Panc1 (cell line): ENCODE measurements at regions of chr15 and their contacts with region 1.

Region 1: GRCh38 chr15:70400766-70401541 is 303.2 kb upstream of the TLE3 start:
- DNase-seq: no peak
- ATAC-seq: no peak
- H3K4me3 ChIP-seq: no peak overlapping the region
- H3K27ac ChIP-seq: no peak overlapping the region
- H3K4me1 ChIP-seq: no peaks in the 10 kb centered on the region
- H3K27me3 ChIP-seq: no peaks in the 10 kb centered on the region
- CTCF ChIP-seq: no peak

Region 2: DNA sequence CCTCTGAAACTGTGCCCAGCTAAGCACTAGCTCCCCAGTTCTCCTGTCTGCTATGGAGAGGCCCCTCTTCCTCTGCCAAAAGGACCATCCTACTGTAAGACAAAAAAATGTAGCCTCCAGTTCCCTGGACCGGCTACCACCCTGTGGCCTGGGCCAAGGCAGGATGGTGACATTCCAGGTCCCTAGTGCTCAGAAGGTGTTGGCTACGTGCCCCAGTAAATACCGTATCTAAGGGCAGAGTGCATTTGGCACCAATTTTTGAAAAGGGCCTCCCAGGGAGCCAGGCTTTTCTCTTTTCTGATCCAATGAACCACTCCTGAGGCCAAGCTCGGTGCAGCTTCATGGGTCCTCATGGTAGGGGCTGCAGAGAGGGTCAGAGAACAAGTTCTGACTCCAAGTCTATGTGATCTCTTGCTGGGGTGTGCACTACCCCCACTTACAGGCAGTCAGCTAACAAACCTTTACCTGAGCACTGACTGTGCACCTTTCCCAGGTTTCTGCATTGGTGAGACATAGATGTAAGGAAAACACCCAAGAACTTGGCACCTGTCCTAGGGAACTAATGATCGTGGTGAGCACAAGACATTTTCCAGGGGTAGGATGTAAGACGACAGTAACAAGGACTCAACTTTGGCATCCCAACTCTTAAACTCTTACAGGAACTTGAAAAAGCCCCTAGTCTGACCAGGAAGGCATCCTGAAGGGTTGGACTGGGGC is 335.8 kb before region 1 on chr15:
- CTCF ChIA-PET with region 1: interaction called, 10 read pairs
- POLR2A ChIA-PET with region 1: no interaction called
- in situ Hi-C with region 1: no loop called
- intact Hi-C with region 1: no loop called
- DNase-seq: no peak
- ATAC-seq: no peak
- H3K4me3 ChIP-seq: no peak overlapping the region
- H3K27ac ChIP-seq: no peak overlapping the region
- H3K4me1 ChIP-seq: no peaks in the 10 kb centered on the region; the same call in 1 of the 2 replicates
- H3K27me3 ChIP-seq: no peaks in the 10 kb centered on the region
- CTCF ChIP-seq: no peak

Region 3: GRCh38 chr15:70259028-70259424 is 141.9 kb before region 1 on chr15:
- CTCF ChIA-PET with region 1: interaction called, 13 read pairs
- POLR2A ChIA-PET with region 1: interaction called, 14 read pairs
- in situ Hi-C with region 1: no loop called
- intact Hi-C with region 1: no loop called
- DNase-seq: no peak
- ATAC-seq: no peak; the same call in 1 of the 2 replicates
- H3K4me3 ChIP-seq: no peak overlapping the region
- H3K27ac ChIP-seq: no peak overlapping the region; the same call in 1 of the 2 replicates
- H3K4me1 ChIP-seq: 0 out of 2 replicates have a peak, but pooled peaks cover 4% of the 10 kb centered on the region
- H3K27me3 ChIP-seq: no peaks in the 10 kb centered on the region
- CTCF ChIP-seq: no peak

Region 4: DNA sequence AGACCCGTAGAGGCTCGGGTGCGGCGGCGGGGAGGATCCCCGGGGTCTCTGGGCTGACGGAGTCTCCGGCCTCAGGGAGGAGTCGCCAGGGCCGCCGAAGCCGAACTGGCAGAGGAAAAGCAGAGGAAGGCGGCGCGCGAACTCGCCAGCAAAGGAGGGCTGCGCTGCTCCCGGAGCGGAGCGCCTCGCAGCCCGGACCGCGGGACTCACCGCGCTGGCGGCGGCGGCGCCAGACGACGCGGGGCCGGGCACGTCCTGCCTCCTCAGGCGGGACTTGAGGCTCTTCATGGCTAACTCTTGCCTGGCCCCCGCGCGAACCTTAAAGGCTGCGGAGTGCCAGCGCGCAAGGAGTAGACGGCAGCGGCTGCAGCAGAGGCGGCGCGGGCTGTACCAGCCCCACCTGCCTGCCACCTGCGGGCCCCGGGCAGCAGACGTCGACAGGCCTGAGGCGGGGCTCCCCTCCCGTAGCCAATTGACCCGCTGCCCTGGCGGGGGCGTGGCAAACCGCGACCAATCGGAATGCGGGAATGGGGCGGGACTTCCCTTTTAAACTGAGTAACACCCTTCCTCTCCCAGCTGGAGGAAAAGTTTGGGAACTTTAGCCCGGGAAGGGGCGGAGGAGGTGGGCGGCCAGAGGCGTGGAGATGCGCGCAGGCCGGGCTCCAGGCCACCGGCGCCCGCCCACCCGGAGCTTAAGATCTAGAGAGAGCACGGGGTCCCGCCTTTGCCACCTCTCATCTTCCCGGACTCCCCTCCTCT is 362.3 kb after region 1 on chr15 and contains the start of gene UACA:
- CTCF ChIA-PET with region 1: no interaction called
- POLR2A ChIA-PET with region 1: no interaction called
- in situ Hi-C with region 1: no loop called
- intact Hi-C with region 1: no loop called
- DNase-seq: peak; percentile 95
- ATAC-seq: peak; percentile 95
- H3K4me3 ChIP-seq: peak within 1 kb of the TSS; percentile 93
- H3K27ac ChIP-seq: peak within 1 kb of the TSS; percentile 100
- H3K4me1 ChIP-seq: peaks cover 42% of the 10 kb centered on the region
- H3K27me3 ChIP-seq: no peaks in the 10 kb centered on the region
- CTCF ChIP-seq: no peak
- total RNA-seq, gene UACA: 303 TPM